ENCODE measurements at regions of chr7 and their contacts with region 1.

Region 1: DNA sequence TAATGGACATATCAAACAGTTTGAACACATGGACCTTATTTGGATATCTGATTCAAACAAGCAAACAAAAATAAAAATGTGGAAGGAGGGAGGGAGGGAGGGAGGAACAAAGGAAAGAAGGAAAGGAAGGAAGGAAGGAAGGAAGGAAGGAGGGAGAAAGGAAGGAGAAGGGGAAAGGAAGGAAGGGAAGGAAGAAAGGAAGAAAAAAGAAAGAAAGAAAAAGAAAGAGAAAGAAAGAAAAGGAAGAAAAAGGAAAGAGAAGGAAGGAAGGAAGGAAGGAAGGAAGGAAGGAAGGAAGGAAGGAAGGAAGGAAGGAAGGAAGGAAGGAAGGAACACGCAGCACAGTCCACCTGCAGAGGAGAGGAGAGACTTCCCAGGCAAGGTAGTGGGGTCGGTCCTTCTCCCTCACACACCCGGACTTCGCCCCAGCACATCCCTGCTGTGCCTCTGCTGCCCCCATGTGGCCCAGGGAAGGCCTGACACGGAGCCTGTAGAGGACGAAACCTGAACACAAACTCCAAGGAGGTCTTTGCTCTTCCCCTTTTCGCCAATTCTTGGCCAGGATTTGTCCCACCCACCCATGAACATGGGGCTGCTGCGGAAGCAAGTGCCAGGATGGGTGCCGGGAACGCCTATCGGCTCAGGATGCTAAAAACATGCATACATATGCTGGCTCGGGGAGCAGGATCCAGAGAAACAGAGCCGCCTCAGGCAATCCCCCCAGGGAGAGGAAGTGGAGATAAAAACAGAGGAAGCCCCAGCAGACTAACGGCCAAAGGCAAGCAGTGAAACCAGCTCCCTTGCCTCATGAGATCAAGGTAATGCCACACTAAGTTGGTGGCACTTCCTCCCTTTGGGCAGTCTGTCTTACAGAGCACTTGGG is 52.3 kb upstream of the DGKI start:
- DNase-seq: peak; percentile 65 to 86
- ATAC-seq: peak; percentile 97

Region 2: GRCh38 chr7:137626469-137627067 is 272.5 kb before region 1 on chr7:
- intact Hi-C with region 1: no loop called
- DNase-seq: peak in 1 of 2 donors; percentile 25
- ATAC-seq: no peak

Region 3: DNA sequence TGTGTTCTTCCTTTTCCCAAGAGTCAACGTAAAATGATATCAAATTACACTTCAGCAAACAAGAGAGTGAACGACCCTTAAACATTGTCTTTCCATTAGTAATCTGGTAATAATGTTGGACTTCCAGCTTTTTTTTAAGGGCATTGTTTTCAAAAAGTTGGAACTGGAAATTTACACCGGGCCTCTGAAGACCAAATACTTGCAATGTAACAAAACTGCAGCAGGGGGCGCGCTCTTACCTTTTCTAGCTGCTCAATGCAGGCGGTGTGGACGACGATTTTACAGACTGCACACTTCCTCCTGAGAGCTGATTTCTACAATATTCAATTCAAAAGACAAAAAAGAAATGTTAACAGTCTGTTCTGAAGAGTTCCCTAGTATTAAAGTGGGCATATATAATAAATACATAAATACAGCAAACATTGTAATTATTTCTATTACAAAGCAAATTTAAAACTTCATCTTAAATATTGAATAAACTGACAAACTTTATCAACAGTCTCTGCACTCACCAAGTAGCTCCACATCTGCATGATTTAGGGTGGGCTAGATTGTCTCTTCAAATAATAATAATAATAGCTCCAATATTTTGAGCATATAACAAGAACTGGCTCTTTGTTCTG is 242.7 kb before region 1 on chr7:
- intact Hi-C with region 1: loop called (anchors 5 to 10 kb)
- DNase-seq: peak; percentile 65 to 84
- ATAC-seq: peak; percentile 76

Region 4: DNA sequence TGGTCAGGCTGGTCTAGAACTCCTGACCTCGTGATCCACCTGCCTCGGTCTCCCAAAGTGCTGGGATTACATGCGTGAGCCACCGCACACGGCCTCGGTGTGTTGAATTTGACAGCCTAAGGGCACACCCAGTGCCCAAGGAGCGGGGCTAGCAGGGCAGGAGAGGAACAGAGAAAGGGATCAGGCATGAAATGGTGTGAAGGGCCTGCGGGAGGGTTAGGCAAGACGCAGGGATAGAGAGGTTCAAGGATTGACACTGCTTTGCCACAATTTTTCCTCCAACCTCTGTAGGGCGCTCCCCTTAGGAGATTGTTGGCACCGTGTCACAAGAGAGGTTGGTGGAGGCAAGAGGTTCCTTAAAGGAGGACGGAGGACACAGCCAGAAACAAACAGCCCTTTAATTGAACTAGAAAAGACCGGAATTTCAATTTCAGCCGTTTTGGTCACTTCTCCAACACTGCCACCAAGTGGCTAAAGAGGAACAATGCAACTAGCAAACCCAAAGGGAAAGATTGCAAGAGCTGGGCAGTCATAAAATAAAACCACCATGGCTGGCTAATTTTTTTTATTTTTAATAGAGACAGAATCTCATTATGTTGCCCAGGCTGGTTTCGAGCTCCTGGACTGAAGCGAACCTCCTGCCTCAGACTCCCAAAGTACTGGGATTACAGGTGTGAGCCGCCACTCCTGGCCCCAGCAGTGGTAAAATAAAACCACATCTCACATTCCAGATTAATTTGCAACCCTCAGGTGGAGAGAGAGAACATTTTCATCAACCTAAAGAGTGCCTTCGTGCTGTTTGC is 109.7 kb after region 1 on chr7:
- intact Hi-C with region 1: loop called in 1 of 2 experiments (anchors 2 kb)
- DNase-seq: no peak
- ATAC-seq: peak; percentile 63